ENCODE measurements at regions of chr1 and their contacts with region 1.

Region 1: GRCh38 chr1:16055613-16056520 is 12.3 kb downstream of the CLCNKB start:
- DNase-seq: peak; percentile 76
- ATAC-seq: peak; percentile 88
- H3K4me3 ChIP-seq: no peak overlapping the region
- H3K27ac ChIP-seq: no peak overlapping the region
- H3K4me1 ChIP-seq: no peaks in the 10 kb centered on the region
- H3K27me3 ChIP-seq: no peaks in the 10 kb centered on the region
- CTCF ChIP-seq: peak; percentile 100

Region 2: DNA sequence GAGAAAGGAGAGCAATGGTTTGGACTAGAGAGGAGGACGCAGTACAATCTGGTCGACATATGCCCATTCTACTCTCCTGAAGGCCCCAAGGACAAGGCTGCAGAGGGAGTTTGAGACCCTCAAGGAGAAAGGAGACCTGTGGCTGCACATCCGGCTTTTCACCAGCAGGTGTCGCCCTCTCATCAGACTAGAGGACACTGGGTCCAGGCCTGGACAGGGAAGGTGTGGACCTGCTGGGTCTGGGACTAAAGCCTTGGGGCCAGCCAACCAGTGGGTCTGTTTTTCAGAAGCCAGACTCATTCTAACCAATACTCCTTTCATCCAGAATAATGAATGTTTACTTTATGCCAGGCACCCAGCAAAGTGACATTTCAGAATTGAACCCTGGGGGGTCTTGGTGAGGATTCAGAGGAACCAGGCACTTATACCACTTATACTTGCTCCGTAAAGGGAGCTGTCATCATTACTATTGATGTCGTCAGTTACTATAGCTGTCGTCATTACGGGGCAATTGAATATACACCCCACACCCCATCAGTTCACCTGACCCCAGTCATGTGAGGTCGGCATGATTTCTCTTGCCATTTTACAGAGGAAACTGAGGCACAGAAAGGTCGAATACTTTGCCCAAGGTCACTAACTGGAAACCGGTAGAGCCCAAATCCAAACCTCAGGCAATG is 46.7 kb before region 1 on chr1:
- CTCF ChIA-PET with region 1: no interaction called
- POLR2A ChIA-PET with region 1: no interaction called
- in situ Hi-C with region 1: no loop called
- intact Hi-C with region 1: loop called (anchors 2 kb)
- DNase-seq: peak; percentile 66
- ATAC-seq: peak; percentile 82
- H3K4me3 ChIP-seq: no peak overlapping the region
- H3K27ac ChIP-seq: no peak overlapping the region
- H3K4me1 ChIP-seq: peaks cover 9% of the 10 kb centered on the region
- H3K27me3 ChIP-seq: no peaks in the 10 kb centered on the region
- CTCF ChIP-seq: peak; percentile 96

Region 3: DNA sequence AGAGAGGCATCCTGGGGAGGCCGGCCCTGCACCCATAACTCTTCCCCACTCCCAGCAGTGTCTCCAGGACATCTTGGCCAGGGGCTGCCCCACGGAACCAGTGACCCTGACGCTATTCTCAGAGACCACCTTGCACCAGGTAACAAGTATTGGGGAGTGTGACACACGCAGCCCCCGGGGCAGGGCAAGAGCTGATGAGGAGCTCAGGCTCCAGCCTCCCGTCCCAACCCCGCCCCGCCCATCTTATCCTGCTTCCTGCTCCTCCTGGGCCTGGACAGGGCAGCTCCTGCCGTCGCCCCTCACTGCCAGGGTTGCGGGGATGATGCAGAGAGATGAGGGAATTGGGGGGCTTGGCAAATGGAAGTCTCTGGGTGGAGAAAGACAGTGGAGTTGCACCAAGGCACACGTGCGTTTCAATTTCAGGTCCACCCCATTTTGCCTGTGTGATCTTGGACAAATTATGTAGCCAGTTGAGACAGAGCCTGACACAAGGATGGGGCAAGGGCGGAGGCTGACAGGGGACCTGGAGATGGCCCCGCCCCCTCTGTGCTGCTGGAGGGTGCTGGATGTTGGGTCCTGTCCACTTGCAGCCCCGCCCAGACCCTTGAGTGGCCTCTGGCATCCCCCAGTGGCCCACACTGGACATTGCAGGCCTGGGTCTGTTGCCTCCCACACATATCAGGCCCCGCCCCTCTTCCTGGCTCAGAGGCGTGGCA is 23.3 kb before region 1 on chr1:
- CTCF ChIA-PET with region 1: no interaction called
- POLR2A ChIA-PET with region 1: no interaction called
- in situ Hi-C with region 1: no loop called
- intact Hi-C with region 1: loop called (anchors 2 kb)
- DNase-seq: peak; percentile 65
- ATAC-seq: peak; percentile 86
- H3K4me3 ChIP-seq: no peak overlapping the region
- H3K27ac ChIP-seq: no peak overlapping the region
- H3K4me1 ChIP-seq: peaks cover 4% of the 10 kb centered on the region; the same call in 1 of the 2 replicates
- H3K27me3 ChIP-seq: no peaks in the 10 kb centered on the region
- CTCF ChIP-seq: peak; percentile 98

Measured in Panc1 (cell line).